Activated naive CD4-positive, alpha-beta T cell treated with anti-CD3 and anti-CD28 coated beads for 36 hours (primary cell): ENCODE measurements at regions of chr2 and their contacts with region 1.

Region 1: GRCh38 chr2:38076606-38077430 is 867 bp upstream of the CYP1B1 start:
- DNase-seq: peak; percentile 81
- H3K4me3 Mint-ChIP-seq: peak overlapping the region; percentile 75
- H3K27ac Mint-ChIP-seq: peak overlapping the region; percentile 72
- H3K4me1 Mint-ChIP-seq: peaks cover 23% of the 10 kb centered on the region
- H3K27me3 Mint-ChIP-seq: peaks cover 46% of the 10 kb centered on the region

Region 2: DNA sequence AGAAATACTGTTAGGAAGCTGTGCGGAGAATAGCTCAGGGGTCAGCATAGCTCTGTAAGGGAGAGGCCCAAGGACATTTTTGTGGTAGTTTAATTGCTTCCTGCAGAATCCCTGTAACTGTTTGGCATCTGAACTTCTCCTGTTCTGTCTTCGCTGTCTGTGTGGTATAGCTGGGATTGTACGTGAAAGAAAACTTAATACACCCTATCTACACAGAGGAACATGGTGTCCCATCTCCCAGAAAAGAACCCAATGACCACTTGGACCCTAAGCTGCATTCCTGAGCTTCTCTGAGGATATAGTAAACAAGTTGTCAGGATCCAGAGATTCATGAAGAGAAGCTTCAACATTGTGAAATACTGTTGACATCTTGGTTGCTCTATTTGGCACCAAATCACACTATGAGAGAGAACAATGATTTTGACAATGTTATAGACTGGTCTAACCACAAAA is 486.7 kb before region 1 on chr2:
- CTCF ChIA-PET with region 1: no interaction called
- intact Hi-C with region 1: no loop called
- DNase-seq: no peak
- H3K4me3 Mint-ChIP-seq: no peak overlapping the region
- H3K27ac Mint-ChIP-seq: no peak overlapping the region
- H3K4me1 Mint-ChIP-seq: peaks cover 44% of the 10 kb centered on the region
- H3K27me3 Mint-ChIP-seq: no peaks in the 10 kb centered on the region

Region 3: DNA sequence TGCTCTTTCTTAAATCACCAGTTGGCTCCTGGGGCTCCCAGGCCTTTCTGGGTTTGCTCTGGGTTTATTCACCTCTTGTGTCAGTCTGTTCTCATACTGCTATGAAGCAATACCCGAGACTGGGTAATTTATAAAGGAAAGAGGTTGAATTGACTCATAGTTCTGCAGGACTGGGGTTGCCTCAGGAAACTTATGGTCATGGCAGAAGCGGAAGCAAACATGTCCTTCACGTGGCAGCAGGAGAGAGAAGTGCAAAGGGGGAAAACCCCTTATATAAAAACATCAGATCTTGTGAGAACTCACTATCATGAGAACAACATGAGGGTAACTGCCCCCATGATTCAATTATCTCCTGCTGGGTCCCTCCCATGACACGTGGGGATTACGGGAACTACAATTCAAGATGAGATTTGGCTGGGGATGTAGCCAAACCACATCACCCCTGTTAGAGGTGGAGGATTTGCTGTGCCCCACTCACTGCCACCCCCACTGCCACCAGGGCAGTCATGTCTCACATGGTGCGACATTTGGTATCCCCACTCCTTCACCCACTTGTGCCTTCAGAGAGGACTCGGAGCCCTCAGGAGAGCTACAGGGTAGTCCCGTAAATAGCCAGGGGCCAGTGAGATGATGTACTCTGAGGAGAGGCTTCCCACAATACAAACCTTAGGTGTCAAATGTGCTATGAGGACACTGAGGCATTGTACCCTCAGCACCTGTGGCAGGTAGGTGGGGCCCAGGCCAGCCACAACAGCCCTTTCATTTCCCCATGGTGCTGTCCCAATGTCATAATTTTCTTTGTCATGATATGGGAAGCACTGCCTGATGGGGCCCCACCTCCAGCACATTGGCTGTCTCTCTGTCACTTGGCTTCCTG is 441.1 kb before region 1 on chr2:
- CTCF ChIA-PET with region 1: no interaction called
- intact Hi-C with region 1: no loop called
- DNase-seq: peak; percentile 85
- H3K4me3 Mint-ChIP-seq: no peak overlapping the region
- H3K27ac Mint-ChIP-seq: peak overlapping the region; percentile 90
- H3K4me1 Mint-ChIP-seq: peaks cover 49% of the 10 kb centered on the region
- H3K27me3 Mint-ChIP-seq: no peaks in the 10 kb centered on the region

Region 4: DNA sequence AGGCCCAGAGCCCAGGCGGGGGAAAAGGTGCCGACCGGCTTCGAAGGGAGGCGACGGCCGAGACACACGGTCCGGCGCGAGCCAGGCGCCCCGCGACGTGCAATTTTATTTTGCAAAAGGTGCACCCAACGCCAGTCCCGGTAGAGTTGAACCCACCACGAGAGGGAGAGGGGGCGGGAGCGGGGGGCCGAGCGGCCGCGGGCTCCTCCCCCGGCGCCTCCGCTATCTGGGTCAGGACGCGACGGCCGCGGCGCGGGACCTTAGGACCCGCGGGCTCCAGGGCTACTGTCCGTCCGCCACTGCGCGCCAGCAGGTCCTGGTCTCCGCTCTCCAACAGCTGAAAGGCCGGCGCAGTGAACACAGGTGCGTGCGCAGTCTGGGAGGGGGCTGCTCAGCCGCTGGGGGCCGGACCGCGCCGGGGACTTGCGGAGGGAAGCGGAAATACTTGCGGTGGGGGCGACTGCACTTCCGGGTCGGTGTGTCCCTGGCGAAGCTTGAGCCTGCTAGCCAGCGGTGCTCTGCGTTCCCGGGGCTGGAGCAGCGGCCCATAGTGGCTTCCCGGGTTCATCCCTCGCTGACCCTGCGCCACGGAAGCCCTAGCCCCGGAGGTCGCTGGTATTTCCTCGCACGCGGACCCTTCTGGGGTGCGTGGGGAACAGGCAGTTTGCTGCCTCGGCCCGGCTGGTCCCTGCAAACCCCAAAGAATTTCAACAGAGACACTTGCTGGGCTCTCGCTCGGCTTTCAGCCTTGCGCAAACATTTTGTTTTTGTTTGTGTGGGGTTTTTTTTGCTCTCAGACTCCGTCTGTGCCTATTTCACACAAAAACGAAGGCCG is 151.5 kb before region 1 on chr2 and contains the start of gene RMDN2:
- CTCF ChIA-PET with region 1: no interaction called
- intact Hi-C with region 1: loop called (anchors 2 kb)
- DNase-seq: peak; percentile 83
- H3K4me3 Mint-ChIP-seq: peak within 1 kb of the TSS; percentile 81
- H3K27ac Mint-ChIP-seq: peak within 1 kb of the TSS; percentile 68
- H3K4me1 Mint-ChIP-seq: peaks cover 8% of the 10 kb centered on the region
- H3K27me3 Mint-ChIP-seq: no peaks in the 10 kb centered on the region
- total RNA-seq, gene RMDN2: 0.79 to 1.2 TPM

Region 5: DNA sequence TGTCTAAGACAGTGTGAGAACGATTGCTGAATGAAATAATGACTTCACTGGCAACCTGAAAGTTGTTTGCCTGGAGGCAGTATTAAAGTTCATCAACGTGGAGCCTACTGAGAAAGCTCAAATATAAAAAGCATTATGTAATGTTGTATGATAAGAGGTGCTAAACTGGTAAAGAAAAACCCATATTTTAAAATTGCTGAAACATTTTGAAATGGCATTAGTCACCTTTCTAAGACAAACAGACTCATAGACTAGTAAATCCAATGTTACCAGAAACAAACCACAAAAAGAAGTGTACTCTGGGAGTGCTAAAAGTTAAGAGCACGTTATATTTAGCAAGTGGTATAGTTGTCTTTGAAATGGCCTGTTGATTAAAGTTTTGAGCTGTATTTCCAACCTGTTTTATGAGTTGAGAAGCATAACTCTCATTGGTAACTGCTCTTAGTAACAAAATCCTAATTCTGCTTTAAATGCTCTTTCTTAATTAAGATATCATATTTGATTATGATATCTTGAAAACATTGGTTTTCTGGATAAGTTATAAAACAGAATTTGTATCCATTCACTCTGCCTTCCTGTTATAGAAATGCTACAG is 63.6 kb before region 1 on chr2:
- CTCF ChIA-PET with region 1: no interaction called
- intact Hi-C with region 1: no loop called
- DNase-seq: no peak
- H3K4me3 Mint-ChIP-seq: no peak overlapping the region
- H3K27ac Mint-ChIP-seq: no peak overlapping the region
- H3K4me1 Mint-ChIP-seq: no peaks in the 10 kb centered on the region
- H3K27me3 Mint-ChIP-seq: no peaks in the 10 kb centered on the region

Region 6: DNA sequence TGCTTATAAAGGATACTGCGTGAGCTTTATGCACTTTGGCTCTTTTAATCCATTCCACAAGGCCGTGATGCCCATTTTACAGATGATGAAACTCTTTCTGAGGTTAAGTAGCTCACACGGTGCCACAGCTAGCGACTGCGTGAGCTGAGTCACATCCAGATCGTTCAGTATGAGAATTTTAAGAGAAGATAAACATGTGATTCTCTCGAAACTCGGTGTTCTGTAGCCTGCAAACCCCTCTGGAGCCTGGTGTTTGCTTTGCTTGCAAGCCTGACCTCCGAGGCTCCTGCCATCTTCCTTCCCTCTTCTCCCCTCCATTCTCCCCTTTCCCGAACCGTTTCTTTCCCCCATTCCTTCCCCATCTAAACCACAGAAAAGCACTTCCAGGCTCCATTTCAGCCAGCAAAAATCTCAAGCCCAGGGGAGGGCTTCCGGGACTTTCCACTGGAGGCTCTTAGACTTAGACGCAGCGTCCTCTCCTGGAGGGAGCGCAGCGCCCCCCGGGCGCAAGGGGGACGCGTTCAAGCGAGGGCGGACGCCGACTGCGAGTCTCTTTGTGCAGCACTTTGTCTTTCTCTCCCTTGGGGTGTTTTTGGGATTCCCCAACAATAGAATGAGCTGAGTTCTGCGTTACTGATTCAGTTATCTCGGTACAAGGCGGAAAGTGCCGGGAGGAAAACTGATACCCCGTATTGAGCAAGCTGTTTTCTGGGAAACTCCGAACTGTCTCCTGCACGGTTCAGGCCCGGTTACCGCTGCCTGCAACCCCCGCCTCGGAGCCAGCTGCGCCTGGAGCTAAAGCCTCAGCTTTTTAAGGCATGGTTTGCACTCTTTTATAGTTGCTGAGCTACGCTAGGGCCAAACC is 38.8 kb before region 1 on chr2:
- CTCF ChIA-PET with region 1: interaction called, 8 read pairs
- intact Hi-C with region 1: loop called (anchors 1 kb)
- DNase-seq: peak; percentile 64
- H3K4me3 Mint-ChIP-seq: peak overlapping the region; percentile 68
- H3K27ac Mint-ChIP-seq: peak overlapping the region; percentile 76
- H3K4me1 Mint-ChIP-seq: peaks cover 16% of the 10 kb centered on the region
- H3K27me3 Mint-ChIP-seq: peaks cover 45% of the 10 kb centered on the region

Region 7: DNA sequence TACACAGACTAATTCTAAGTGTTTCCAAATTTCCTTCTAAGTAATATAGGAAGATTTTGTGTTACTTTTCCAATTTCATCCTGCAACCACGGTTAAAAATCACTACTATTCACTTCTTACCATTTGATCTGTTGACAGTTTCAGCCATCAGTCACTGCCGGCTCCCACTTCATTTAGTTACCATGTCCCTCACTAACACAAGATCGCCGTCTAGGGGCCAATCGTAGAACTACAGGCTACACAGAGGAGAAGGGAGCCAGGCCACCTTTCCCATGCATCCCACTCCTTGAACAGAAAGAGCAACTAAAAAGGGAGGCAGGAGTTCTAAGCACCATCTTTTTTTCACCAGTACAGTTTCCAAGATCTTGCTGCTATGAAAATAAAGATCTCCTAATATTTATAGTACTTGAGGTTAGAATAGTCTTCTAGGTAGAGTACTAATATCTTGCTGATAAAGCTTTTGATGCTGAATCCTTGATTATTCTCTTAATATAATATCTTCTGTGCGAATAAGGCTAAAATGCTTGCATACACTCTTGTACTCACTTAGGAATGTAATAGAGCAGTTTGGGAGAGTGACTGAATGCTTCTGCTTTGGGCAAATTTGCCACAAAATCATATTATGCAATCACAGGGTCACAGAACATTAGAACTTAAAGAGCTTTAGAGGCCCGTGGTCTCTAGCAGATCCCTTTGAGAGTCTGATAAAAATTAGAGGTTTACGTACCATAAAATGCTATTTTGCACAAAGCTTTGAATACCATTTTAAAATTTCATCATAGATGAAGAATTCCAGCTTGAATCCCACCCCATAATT is 38.6 kb after region 1 on chr2:
- CTCF ChIA-PET with region 1: interaction called, 7 read pairs
- intact Hi-C with region 1: loop called (anchors 1 kb)
- DNase-seq: peak; percentile 92
- H3K4me3 Mint-ChIP-seq: no peak overlapping the region
- H3K27ac Mint-ChIP-seq: no peak overlapping the region
- H3K4me1 Mint-ChIP-seq: no peaks in the 10 kb centered on the region
- H3K27me3 Mint-ChIP-seq: peaks cover 13% of the 10 kb centered on the region

Region 8: GRCh38 chr2:38170098-38170497 is 93.3 kb after region 1 on chr2:
- CTCF ChIA-PET with region 1: no interaction called
- intact Hi-C with region 1: no loop called
- DNase-seq: no peak
- H3K4me3 Mint-ChIP-seq: no peak overlapping the region
- H3K27ac Mint-ChIP-seq: no peak overlapping the region
- H3K4me1 Mint-ChIP-seq: no peaks in the 10 kb centered on the region
- H3K27me3 Mint-ChIP-seq: peaks cover 2% of the 10 kb centered on the region

Region 9: DNA sequence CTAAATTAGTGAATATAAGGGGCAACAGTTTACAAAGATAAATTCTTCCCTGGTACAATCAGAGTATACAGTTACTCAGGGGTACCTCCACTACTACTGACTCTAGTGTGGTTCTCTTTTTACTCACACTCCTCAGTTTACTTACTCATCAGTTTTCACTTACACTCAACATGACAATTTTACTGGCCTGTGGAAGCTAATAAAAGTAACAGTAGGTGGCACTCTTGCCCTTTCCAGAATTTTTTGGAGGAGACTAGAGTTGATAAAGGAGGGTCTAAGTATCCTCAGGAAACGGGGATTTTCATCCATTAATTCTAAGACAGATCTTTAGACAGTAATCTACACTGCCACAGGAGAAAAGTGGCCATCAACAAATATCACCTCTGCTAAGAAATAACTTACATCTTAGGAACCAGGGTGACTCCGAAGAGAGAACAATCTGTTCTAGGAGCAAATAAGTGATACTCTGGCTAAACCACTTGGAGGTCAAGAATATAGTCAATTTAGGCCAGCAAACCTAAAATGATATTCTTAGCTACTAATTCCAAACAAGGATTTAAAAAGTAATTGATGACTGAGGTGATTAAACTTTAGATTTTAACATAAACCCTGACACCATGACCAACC is 239.0 kb after region 1 on chr2:
- CTCF ChIA-PET with region 1: no interaction called
- intact Hi-C with region 1: loop called (anchors 1 kb)
- DNase-seq: peak; percentile 32
- H3K4me3 Mint-ChIP-seq: no peak overlapping the region
- H3K27ac Mint-ChIP-seq: no peak overlapping the region
- H3K4me1 Mint-ChIP-seq: peaks cover 12% of the 10 kb centered on the region
- H3K27me3 Mint-ChIP-seq: no peaks in the 10 kb centered on the region